ENCODE measurements at regions of chr6 and their contacts with region 1.

Region 1: DNA sequence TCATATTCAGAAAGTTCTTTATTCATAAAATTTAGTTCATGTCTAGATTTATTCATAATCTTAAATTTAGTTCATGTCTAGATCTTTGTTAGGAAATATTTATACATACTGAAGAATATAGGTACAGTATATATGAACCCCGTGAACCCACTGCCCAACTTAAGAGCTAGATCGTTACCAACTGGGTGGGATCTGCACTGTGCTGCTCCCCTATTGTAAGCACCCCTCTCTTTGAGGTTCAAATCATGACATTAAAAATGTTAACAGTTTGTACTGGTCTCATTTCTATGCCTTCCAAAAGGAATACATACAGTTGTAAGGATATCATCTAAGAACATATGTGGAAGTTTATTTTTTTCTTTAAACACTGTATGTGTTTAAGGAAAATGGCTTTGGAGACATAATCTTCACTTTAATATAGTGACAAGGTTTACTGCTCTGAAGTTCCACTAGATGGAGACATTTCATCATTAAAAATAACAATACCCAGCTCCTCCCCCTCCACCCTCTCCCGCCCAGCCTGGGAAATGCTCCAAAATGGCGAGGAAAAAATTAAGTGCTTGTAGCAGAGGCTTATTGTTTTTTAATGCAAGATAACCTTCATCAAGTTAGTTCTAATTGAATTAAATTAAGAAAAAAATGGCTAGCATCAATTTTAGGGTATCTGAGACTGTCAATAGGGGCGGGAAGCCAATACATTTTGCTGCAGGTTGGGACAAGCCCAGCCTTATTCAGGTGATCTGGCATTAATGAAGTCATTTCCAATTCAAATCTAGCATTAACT is 104.1 kb upstream of the TRAF3IP2 start:
- DNase-seq: peak; percentile 64
- H3K4me3 ChIP-seq: peak overlapping the region in 1 of 4 donors; percentile 23
- H3K27ac ChIP-seq: peak overlapping the region; percentile 17 to 58 (median 37)
- H3K4me1 ChIP-seq: peaks cover 17 to 47% (median 37%) of the 10 kb centered on the region in 4 donors
- H3K27me3 ChIP-seq: no peaks in the 10 kb centered on the region
- CTCF ChIP-seq: peak; percentile 68 to 94 (median 72)
- EP300 ChIP-seq: no peak
- POLR2A ChIP-seq: no peak

Region 2: DNA sequence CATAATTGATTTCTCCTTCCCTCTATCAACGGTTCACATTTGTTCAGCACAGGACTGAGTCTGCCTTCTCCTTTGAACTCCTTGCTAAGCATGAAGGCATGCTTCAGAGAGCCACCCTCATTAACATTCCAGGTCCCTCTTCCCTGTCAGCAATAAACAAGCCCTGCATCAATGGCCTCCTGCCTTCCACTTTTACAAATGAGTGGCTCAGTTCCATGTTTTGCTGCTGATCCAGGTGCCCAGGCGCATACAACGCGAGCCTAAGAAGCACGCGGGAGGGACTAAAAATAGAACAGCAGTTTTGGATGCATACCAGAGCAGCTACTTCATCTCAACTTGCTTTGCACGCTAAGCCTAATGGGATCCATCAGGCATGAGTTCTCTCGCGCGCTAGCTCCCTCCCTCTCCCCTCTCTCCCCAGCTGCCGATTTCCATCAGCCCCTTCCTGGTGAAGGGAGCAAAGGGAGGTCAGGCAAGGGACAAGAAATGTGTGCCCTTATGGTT is 157.5 kb before region 1 on chr6:
- in situ Hi-C with region 1: no loop called
- intact Hi-C with region 1: no loop called
- DNase-seq: peak; percentile 46
- H3K4me3 ChIP-seq: no peak overlapping the region
- H3K27ac ChIP-seq: peak overlapping the region; percentile 73 to 83 (median 77)
- H3K4me1 ChIP-seq: peaks cover 23 to 46% (median 35%) of the 10 kb centered on the region in 4 donors
- H3K27me3 ChIP-seq: no peaks in the 10 kb centered on the region
- CTCF ChIP-seq: no peak
- EP300 ChIP-seq: no peak
- POLR2A ChIP-seq: no peak

Region 3: GRCh38 chr6:111642463-111643158 is 67.2 kb before region 1 on chr6:
- in situ Hi-C with region 1: no loop called
- intact Hi-C with region 1: no loop called
- DNase-seq: peak; percentile 68
- H3K4me3 ChIP-seq: no peak overlapping the region
- H3K27ac ChIP-seq: no peak overlapping the region
- H3K4me1 ChIP-seq: peaks cover 0 to 3% (median 0%) of the 10 kb centered on the region in 4 donors
- H3K27me3 ChIP-seq: no peaks in the 10 kb centered on the region
- CTCF ChIP-seq: peak; percentile 55 to 72 (median 68)
- EP300 ChIP-seq: no peak
- POLR2A ChIP-seq: no peak

Region 4: DNA sequence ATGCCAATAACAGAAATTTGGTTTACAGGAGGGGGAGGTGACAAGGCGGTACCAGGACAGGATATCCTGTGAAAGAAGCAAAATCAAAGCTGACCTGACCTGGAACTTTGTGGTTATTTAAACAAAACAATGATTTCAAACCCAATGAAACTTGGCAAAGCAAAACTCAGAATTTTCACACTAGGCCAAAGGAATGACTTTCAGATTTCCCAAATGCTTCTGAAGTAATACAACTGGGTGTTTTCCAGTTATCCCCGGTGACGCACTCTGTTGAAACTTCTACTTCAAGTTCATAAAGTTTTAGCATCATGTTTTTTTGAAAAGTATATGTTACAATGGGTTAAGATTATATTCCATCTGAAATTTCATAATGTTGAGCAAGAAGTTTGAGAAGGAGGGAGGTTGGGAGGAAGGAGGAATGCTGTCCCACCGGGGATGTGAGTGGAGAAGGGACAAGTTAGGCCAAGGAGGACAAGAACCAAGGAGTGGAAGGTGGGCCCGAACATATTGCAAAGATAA is 26.0 kb before region 1 on chr6:
- in situ Hi-C with region 1: no loop called
- intact Hi-C with region 1: no loop called
- DNase-seq: no peak
- H3K4me3 ChIP-seq: no peak overlapping the region
- H3K27ac ChIP-seq: peak overlapping the region; percentile 54 to 79 (median 68)
- H3K4me1 ChIP-seq: peaks cover 0 to 58% (median 20%) of the 10 kb centered on the region in 4 donors
- H3K27me3 ChIP-seq: no peaks in the 10 kb centered on the region
- CTCF ChIP-seq: no peak
- EP300 ChIP-seq: no peak
- POLR2A ChIP-seq: no peak

Region 5: DNA sequence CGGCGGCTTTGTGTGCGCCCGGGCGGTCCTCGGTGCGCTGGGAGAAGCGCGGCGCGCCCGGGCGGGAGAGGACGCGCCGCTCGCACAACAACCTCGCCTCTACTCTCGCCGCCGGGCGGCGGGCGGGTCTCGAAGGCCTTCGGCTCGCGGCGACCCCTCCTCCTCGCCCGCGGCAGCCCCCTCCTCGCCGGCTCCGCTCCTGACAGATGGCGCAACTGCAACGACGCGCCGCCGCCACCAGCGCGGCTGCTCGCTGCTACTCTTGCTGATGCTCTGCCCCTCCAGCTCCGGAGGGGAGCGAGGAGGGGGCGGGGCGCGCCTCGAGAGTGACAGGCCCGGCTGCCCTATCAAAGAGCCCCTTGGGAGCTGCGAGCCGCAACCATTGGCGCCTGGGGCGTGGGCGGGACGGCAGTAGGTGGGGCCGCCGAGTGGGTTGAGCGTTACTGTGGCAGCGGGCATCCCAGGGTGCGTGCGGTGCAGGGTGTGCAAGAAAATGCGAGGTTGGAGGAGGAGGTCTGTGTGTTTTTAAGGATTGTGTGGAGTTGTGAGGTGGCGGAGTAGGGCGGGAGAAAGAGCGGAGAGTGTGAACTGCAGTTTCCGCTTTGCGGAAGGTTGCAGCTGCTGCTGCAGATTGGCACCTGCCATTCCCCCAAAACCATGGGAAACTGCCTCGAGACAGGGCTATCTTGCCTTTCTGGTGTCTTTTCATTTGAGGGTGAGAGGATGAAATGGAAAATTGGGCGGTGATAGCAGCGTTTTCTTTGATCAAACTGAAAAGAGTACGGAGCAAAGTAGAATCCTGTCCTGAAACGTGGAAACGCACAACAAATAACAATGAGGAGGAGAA is 163.6 kb after region 1 on chr6 and contains the start of gene FYN:
- in situ Hi-C with region 1: no loop called
- intact Hi-C with region 1: loop called (anchors 5 kb)
- DNase-seq: peak; percentile 96
- H3K4me3 ChIP-seq: peak within 1 kb of the TSS; percentile 68 to 82 (median 72)
- H3K27ac ChIP-seq: peak within 1 kb of the TSS; percentile 86 to 90 (median 88)
- H3K4me1 ChIP-seq: peaks cover 0 to 20% (median 13%) of the 10 kb centered on the region in 4 donors
- H3K27me3 ChIP-seq: peaks cover 52% of the 10 kb centered on the region
- CTCF ChIP-seq: peak; percentile 31 to 74 (median 40)
- EP300 ChIP-seq: no peak
- POLR2A ChIP-seq: peak; percentile 68
- total RNA-seq, gene FYN: 16.3 to 288 (median 52.2) TPM

Region 6: DNA sequence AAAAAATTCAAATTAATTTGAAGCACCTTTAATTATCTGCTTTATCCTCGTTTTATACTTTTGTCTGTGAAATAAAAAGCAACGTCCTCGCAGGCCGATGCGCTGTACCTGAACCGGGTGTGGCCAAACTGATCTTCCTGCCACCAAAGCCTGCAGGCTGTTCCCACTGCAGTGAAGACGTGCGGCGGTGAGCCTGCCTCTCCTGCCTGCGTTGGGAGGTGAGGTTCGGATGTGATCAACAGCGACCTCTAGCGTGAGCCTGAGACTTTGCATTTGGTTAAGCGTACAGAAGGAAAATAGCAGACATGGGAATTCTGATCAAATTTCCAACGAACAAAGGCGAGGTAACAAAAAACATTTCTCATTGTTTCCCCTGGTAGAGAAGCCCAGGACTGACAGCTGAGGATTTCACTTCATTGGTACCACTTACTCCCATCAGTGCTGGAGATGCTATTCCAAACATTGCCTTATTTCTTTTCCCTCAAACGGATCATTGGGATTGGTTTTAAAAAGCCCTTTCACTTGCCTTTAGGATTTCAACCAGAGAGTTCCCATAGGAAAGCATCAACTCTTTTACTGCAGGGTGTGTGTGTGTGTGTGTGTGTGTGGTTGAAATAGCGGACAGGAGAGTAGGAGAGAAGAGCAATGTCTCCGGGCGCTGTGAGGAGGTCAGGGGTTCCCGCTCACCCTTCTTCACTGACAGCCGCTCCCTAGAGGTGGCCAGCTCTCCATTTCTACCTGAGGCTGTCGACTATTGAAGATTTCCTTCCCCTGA is 287.5 kb after region 1 on chr6:
- in situ Hi-C with region 1: loop called (anchors 5 to 10 kb)
- intact Hi-C with region 1: no loop called
- DNase-seq: peak; percentile 80
- H3K4me3 ChIP-seq: no peak overlapping the region
- H3K27ac ChIP-seq: peak overlapping the region in 1 of 4 donors; percentile 15
- H3K4me1 ChIP-seq: peaks cover 0 to 8% (median 0%) of the 10 kb centered on the region in 4 donors
- H3K27me3 ChIP-seq: no peaks in the 10 kb centered on the region
- CTCF ChIP-seq: peak; percentile 82 to 93 (median 88)
- EP300 ChIP-seq: no peak
- POLR2A ChIP-seq: no peak

Region 7: DNA sequence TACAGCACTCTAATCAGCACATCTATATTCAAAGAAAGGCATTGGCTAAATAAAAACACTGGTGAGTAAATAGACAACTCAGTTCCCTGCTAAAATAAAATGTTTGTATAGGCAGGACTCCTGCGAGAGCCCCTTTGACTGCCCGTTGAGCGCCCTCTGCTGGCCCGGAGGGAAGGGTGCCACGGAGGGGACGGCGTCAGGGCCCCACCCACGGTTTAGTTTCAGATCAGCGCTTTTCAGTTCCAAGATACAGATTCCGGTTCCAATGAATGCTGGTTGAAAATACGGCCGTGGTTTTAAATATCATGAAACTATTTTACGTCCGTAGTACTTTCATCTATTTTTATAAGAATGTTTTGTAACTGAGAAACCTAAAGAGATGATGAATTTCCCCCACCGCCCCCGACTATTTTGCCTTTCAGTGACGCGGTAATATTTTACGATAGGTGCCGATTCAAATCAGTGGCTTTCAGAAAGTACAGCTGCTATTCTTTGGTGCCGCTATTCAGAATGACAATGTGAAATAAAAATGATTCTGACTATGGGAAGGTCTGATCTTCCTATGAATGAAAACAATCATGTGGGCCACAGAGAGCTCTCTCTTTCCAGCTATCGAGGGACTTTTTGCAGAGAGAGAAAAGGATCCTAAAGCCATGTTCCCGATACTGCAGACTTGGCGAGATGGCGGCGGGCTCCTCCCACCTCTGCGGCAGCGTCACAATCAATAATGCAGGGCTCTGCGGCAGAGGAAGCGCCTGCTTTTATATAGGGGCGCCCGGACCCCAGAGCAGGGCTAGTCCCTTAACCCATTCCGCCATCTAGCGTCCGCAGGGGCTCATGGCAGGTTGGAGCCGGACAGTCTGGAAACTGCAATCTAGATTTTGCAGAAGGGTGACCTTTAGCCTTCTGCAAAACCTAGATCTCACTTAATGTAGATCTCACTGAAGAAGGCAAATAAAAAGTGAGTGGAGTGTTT is 333.5 kb after region 1 on chr6:
- in situ Hi-C with region 1: loop called in 1 of 4 experiments (anchors 10 kb)
- intact Hi-C with region 1: loop called (anchors 5 kb)
- DNase-seq: peak; percentile 89
- H3K4me3 ChIP-seq: peak overlapping the region; percentile 47 to 73 (median 52)
- H3K27ac ChIP-seq: peak overlapping the region; percentile 81 to 90 (median 84)
- H3K4me1 ChIP-seq: peaks cover 2 to 13% (median 9%) of the 10 kb centered on the region in 4 donors
- H3K27me3 ChIP-seq: no peaks in the 10 kb centered on the region
- CTCF ChIP-seq: peak; percentile 87 to 96 (median 94)
- EP300 ChIP-seq: no peak
- POLR2A ChIP-seq: peak; percentile 20

Region 8: GRCh38 chr6:112153926-112154607 is 444.3 kb after region 1 on chr6:
- in situ Hi-C with region 1: loop called in 1 of 4 experiments (anchors 10 kb)
- intact Hi-C with region 1: no loop called
- DNase-seq: no peak
- H3K4me3 ChIP-seq: no peak overlapping the region
- H3K27ac ChIP-seq: peak overlapping the region in 2 of 4 donors; percentile 5 to 69
- H3K4me1 ChIP-seq: peaks cover 0 to 21% (median 2%) of the 10 kb centered on the region in 4 donors
- H3K27me3 ChIP-seq: no peaks in the 10 kb centered on the region
- CTCF ChIP-seq: no peak
- EP300 ChIP-seq: no peak
- POLR2A ChIP-seq: no peak

Region 9: GRCh38 chr6:112163295-112164257 is 453.8 kb after region 1 on chr6:
- in situ Hi-C with region 1: loop called in 1 of 4 experiments (anchors 10 kb)
- intact Hi-C with region 1: loop called (anchors 10 kb)
- DNase-seq: peak; percentile 72
- H3K4me3 ChIP-seq: no peak overlapping the region
- H3K27ac ChIP-seq: no peak overlapping the region
- H3K4me1 ChIP-seq: no peaks in the 10 kb centered on the region
- H3K27me3 ChIP-seq: no peaks in the 10 kb centered on the region
- CTCF ChIP-seq: peak; percentile 65 to 82 (median 73)
- EP300 ChIP-seq: no peak
- POLR2A ChIP-seq: no peak